Activated T-helper 1 cell treated with anti-CD3 and anti-CD28 coated beads, Interleukin-12 subunit alpha, Interleukin-12 subunit beta, Interleukin-2, Interleukin-4 antibody, amounts not matched to agents 30 ng/mL and 10 ng/mL and 1 ng/mL, durations not matched to agents 14 hours and 24 hours and 36 hours (primary cell): ENCODE measurements at regions of chrX and their contacts with region 1.

Region 1: GRCh38 chrX:34227804-34228203 is 95.7 kb upstream of the FAM47A start:
- DNase-seq: no peak
- H3K4me3 Mint-ChIP-seq: no peak overlapping the region
- H3K27ac Mint-ChIP-seq: no peak overlapping the region
- H3K4me1 Mint-ChIP-seq: no peaks in the 10 kb centered on the region
- H3K27me3 Mint-ChIP-seq: no peaks in the 10 kb centered on the region

Region 2: GRCh38 chrX:34197946-34198345 is 29.9 kb before region 1 on chrX:
- intact Hi-C with region 1: loop called (anchors 2 kb)
- DNase-seq: no peak
- H3K4me3 Mint-ChIP-seq: no peak overlapping the region
- H3K27ac Mint-ChIP-seq: no peak overlapping the region
- H3K4me1 Mint-ChIP-seq: no peaks in the 10 kb centered on the region
- H3K27me3 Mint-ChIP-seq: no peaks in the 10 kb centered on the region